ENCODE measurements at regions of chrX and their contacts with region 1.

Region 1: DNA sequence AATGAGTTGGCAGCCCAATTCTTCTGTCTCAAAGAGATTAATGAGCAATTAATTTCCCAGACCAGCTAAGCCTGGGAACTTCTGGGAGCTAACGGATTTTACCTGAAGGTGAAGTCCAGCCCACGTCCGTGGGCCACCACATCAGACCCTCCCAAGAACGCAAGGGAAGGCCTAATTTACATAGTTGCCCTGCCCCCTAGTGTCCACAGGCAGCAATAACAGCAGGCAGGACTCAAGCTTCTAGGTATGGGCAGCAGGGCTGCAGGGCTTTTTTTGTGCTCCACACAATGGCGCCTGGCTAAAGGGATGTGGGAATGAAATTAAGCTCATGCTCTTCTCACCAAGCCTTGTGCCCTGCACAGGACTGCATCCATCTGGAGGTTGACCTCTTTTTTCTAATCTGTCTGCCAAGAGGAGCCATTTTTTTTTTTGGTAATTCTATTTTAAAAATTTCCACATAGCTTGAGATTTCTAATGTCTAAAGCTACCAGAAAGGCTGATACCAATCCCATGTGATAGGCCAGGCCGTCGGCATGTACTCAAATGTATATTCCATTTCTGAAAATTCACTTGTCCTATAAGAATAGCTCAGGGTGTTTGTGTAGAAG is 111.9 kb upstream of the TMEM164 start:
- DNase-seq: peak; percentile 56
- CTCF ChIP-seq: peak; percentile 87

Region 2: DNA sequence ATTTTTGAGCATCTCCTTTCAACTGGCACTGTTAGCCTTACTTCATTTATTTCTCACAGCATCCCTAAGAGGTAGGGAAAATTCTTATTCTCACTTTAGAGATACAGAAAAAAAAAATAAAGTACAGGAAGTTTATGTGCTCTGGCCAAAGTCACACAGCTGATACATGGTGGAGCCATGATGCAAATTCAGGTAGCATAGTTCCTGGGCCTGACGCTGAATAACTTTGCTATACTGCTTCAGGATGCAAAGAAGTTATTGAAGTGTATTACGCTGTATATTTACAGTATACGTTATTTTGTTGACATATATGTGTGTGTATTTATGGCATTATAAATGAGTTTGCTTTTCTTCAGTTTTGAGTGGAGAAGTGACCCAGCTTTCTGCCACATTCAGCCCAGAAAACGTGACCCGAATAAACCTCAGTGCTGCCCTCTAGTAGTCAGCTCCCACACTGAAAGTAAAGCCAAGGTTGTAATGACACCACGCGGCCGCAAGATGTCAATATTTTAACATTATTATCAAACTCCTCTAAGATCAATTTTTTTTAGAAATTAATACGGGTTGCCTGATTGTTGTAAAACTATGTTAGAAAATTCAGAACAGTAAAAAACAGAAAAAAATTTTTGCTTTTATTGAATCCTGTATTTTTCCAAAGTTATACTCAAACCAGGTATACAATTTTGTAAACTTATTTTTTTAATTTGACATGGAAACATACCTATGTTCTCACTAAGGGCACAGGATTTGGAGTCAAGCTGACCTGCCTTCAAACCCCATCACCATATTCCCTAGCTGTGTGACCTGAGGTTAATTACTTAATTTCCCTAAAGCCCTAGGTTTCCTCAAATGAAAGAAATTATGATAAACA is 405.3 kb before region 1 on chrX:
- CTCF ChIA-PET with region 1: interaction called, 43 read pairs
- POLR2A ChIA-PET with region 1: no interaction called
- DNase-seq: peak; percentile 25
- CTCF ChIP-seq: peak; percentile 69

Region 3: GRCh38 chrX:109714340-109714958 is 176.6 kb before region 1 on chrX:
- CTCF ChIA-PET with region 1: interaction called, 105 read pairs
- POLR2A ChIA-PET with region 1: no interaction called
- DNase-seq: no peak
- CTCF ChIP-seq: no peak

Region 4: GRCh38 chrX:109872021-109872732 is 18.8 kb before region 1 on chrX:
- CTCF ChIA-PET with region 1: interaction called, 38 read pairs
- POLR2A ChIA-PET with region 1: no interaction called
- DNase-seq: no peak
- CTCF ChIP-seq: no peak

Region 5: DNA sequence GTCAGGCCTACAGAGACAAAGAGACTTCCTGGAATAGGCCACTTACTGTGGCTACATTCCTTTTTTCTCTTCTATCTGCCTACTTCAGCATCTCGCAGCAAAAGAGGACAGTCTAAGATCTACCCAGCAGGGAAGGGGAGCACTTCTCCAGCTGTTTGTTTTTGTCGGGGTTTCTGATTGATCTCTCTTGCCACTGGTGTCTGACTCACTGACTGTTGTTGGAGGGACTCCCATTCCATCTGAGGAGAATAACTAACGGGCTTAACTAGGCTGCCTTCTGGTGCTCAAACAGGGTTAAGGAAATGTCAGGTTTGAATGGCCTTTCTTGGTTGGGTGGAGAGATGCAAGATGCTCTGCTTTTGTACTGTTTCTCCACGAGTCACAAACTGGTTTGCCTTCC is 11.7 kb after region 1 on chrX:
- CTCF ChIA-PET with region 1: interaction called, 24 read pairs
- POLR2A ChIA-PET with region 1: no interaction called
- DNase-seq: no peak
- CTCF ChIP-seq: no peak

Measured in GM10248 (cell line).